CD4-positive, alpha-beta T cell (primary cell): ENCODE measurements at regions of chr1 and their contacts with region 1.

Region 1: GRCh38 chr1:206575165-206575893 is 36.9 kb downstream of the EIF2D start:
- DNase-seq: peak in 9 of 14 experiments; percentile 26 to 88 (median 56)
- ATAC-seq: peak; percentile 63
- H3K4me3 ChIP-seq: peak overlapping the region; percentile 29
- H3K4me3 Mint-ChIP-seq: peak overlapping the region; percentile 70
- H3K27ac ChIP-seq: peak overlapping the region; percentile 93 to 95
- H3K27ac Mint-ChIP-seq: peak overlapping the region; percentile 86
- H3K4me1 ChIP-seq: peaks cover 97% of the 10 kb centered on the region
- H3K4me1 Mint-ChIP-seq: peaks cover 98% of the 10 kb centered on the region
- H3K27me3 ChIP-seq: no peaks in the 10 kb centered on the region
- H3K27me3 Mint-ChIP-seq: no peaks in the 10 kb centered on the region
- CTCF ChIP-seq: no peak

Region 2: GRCh38 chr1:206469933-206470691 is 105.2 kb before region 1 on chr1 and contains the start of gene IKBKE:
- CTCF ChIA-PET with region 1: no interaction called
- POLR2A ChIA-PET with region 1: interaction called, 11 read pairs
- intact Hi-C with region 1: loop called in 1 of 2 experiments (anchors 5 kb)
- DNase-seq: peak; percentile 24 to 77 (median 40)
- ATAC-seq: peak; percentile 67
- H3K4me3 ChIP-seq: peak within 1 kb of the TSS; percentile 99
- H3K4me3 Mint-ChIP-seq: peak within 1 kb of the TSS; percentile 88
- H3K27ac ChIP-seq: peak within 1 kb of the TSS; percentile 55 to 61
- H3K27ac Mint-ChIP-seq: peak within 1 kb of the TSS; percentile 79
- H3K4me1 ChIP-seq: peaks cover 86% of the 10 kb centered on the region
- H3K4me1 Mint-ChIP-seq: peaks cover 76% of the 10 kb centered on the region
- H3K27me3 ChIP-seq: no peaks in the 10 kb centered on the region
- H3K27me3 Mint-ChIP-seq: no peaks in the 10 kb centered on the region
- CTCF ChIP-seq: no peak
- total RNA-seq, gene IKBKE: 27.9 to 29.8 TPM

Region 3: GRCh38 chr1:206551986-206552326 is 23.4 kb before region 1 on chr1:
- CTCF ChIA-PET with region 1: interaction called, 236 read pairs
- POLR2A ChIA-PET with region 1: interaction called, 135 read pairs
- intact Hi-C with region 1: loop called in 1 of 2 experiments (anchors 1 kb)
- DNase-seq: peak; percentile 53 to 94 (median 70)
- ATAC-seq: peak; percentile 90
- H3K4me3 ChIP-seq: no peak overlapping the region
- H3K4me3 Mint-ChIP-seq: peak overlapping the region; percentile 80
- H3K27ac ChIP-seq: peak overlapping the region; percentile 72 to 81
- H3K27ac Mint-ChIP-seq: peak overlapping the region; percentile 86
- H3K4me1 ChIP-seq: peaks cover 64% of the 10 kb centered on the region
- H3K4me1 Mint-ChIP-seq: peaks cover 63% of the 10 kb centered on the region
- H3K27me3 ChIP-seq: no peaks in the 10 kb centered on the region
- H3K27me3 Mint-ChIP-seq: no peaks in the 10 kb centered on the region
- CTCF ChIP-seq: peak; percentile 39

Region 4: DNA sequence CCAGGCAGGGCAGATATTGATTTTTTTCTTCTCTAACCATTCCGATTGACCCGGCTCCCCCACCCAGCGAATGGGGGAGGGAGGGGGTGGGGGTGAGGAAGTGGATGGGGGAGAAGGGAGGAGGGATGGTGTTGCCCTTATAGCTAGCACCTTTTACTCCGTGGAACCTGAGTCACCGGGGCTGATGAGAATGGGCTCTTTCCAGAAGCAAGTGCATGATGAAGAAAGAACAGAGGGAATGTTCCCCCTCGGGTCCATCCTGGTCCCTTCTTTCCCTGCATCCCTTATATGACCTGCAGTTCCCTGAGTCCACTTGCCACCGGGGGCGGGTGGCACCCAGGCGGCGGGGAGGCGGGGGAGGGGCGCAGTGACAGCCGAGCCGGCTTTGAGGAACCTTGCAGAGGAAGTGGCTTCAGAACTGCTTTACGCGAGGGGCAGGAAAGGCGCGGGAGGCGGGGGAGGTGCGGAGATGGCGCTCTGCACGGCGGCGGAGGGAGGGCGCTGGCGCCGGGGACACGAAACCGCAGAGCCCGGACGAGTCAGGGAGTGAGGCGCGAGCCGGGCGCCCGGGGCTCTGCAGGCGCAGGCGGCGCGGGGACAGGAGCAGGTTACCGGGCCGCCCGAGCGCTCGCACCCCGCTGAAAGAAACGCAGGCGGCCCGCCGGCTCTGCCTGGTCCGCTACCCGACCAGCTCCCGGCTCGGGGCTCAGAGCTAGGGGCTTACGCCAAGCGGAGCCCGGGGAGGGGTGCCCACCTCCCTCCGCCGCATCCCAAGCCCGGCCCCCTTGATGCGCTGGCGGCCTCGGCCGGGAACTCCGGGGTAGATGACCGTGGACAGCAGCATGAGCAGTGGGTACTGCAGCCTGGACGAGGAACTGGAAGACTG is 18.3 kb before region 1 on chr1:
- CTCF ChIA-PET with region 1: interaction called, 236 read pairs
- POLR2A ChIA-PET with region 1: interaction called, 169 read pairs
- intact Hi-C with region 1: loop called (anchors 1 to 2 kb)
- DNase-seq: peak; percentile 72 to 96 (median 90)
- ATAC-seq: peak; percentile 69
- H3K4me3 ChIP-seq: peak overlapping the region; percentile 94
- H3K4me3 Mint-ChIP-seq: peak overlapping the region; percentile 97
- H3K27ac ChIP-seq: peak overlapping the region; percentile 69 to 99
- H3K27ac Mint-ChIP-seq: peak overlapping the region; percentile 86
- H3K4me1 ChIP-seq: peaks cover 77% of the 10 kb centered on the region
- H3K4me1 Mint-ChIP-seq: peaks cover 86% of the 10 kb centered on the region
- H3K27me3 ChIP-seq: no peaks in the 10 kb centered on the region
- H3K27me3 Mint-ChIP-seq: no peaks in the 10 kb centered on the region
- CTCF ChIP-seq: no peak

Region 5: GRCh38 chr1:206563367-206564207 is 11.7 kb before region 1 on chr1:
- CTCF ChIA-PET with region 1: interaction called, 236 read pairs
- POLR2A ChIA-PET with region 1: interaction called, 169 read pairs
- intact Hi-C with region 1: loop called (anchors 1 to 2 kb)
- DNase-seq: no peak
- ATAC-seq: peak; percentile 21
- H3K4me3 ChIP-seq: peak overlapping the region; percentile 25
- H3K4me3 Mint-ChIP-seq: peak overlapping the region; percentile 76
- H3K27ac ChIP-seq: peak overlapping the region; percentile 56 to 82
- H3K27ac Mint-ChIP-seq: peak overlapping the region; percentile 86
- H3K4me1 ChIP-seq: peaks cover 94% of the 10 kb centered on the region
- H3K4me1 Mint-ChIP-seq: peaks cover 100% of the 10 kb centered on the region
- H3K27me3 ChIP-seq: no peaks in the 10 kb centered on the region
- H3K27me3 Mint-ChIP-seq: no peaks in the 10 kb centered on the region
- CTCF ChIP-seq: no peak